A549 (cell line): ENCODE measurements at regions of chr20 and their contacts with region 1.

Region 1: GRCh38 chr20:50165684-50166554 is 12.4 kb upstream of the PEDS1 start:
- DNase-seq: peak; percentile 99 to 100
- ATAC-seq: peak; percentile 94 to 98
- H3K4me3 ChIP-seq: peak overlapping the region; percentile 30
- H3K27ac ChIP-seq: peak overlapping the region; percentile 81 to 92
- H3K4me1 ChIP-seq: peaks cover 40% of the 10 kb centered on the region
- CTCF ChIP-seq: no peak
- EP300 ChIP-seq: peak; percentile 68 to 90; a peak in 3 of 5 replicates
- POLR2A ChIP-seq: no peak
- RAD21 ChIP-seq: peak in 1 of 2 experiments; percentile 45; a peak in 2 of 5 replicates

Region 2: GRCh38 chr20:50085452-50086365 is 80.2 kb before region 1 on chr20:
- CTCF ChIA-PET with region 1: interaction called, 26 read pairs
- POLR2A ChIA-PET with region 1: no interaction called
- DNase-seq: peak; percentile 70 to 81
- ATAC-seq: peak; percentile 87 to 91
- H3K4me3 ChIP-seq: no peak overlapping the region
- H3K27ac ChIP-seq: peak overlapping the region; percentile 19 to 69; a peak in 4 of 6 replicates
- H3K4me1 ChIP-seq: peaks cover 29% of the 10 kb centered on the region
- CTCF ChIP-seq: peak; percentile 92
- EP300 ChIP-seq: no peak
- POLR2A ChIP-seq: no peak
- RAD21 ChIP-seq: peak; percentile 72 to 81

Region 3: GRCh38 chr20:50115591-50116372 is 50.1 kb before region 1 on chr20:
- CTCF ChIA-PET with region 1: interaction called, 1,085 read pairs
- POLR2A ChIA-PET with region 1: interaction called, 9 read pairs
- DNase-seq: peak; percentile 92 to 96
- ATAC-seq: peak; percentile 82 to 87
- H3K4me3 ChIP-seq: peak overlapping the region; percentile 54
- H3K27ac ChIP-seq: peak overlapping the region; percentile 69 to 84
- H3K4me1 ChIP-seq: peaks cover 31% of the 10 kb centered on the region
- CTCF ChIP-seq: no peak
- EP300 ChIP-seq: no peak
- POLR2A ChIP-seq: peak; percentile 61
- RAD21 ChIP-seq: no peak

Region 4: GRCh38 chr20:50146732-50147662 is 18.9 kb before region 1 on chr20:
- CTCF ChIA-PET with region 1: interaction called, 97 read pairs
- POLR2A ChIA-PET with region 1: interaction called, 19 read pairs
- DNase-seq: no peak
- ATAC-seq: no peak
- H3K4me3 ChIP-seq: no peak overlapping the region
- H3K27ac ChIP-seq: peak overlapping the region in 1 of 2 experiments; percentile 95; a peak in 4 of 6 replicates
- H3K4me1 ChIP-seq: peaks cover 79% of the 10 kb centered on the region
- CTCF ChIP-seq: no peak
- EP300 ChIP-seq: no peak
- POLR2A ChIP-seq: no peak
- RAD21 ChIP-seq: no peak

Region 5: GRCh38 chr20:50179507-50180016 is 13.6 kb after region 1 on chr20:
- CTCF ChIA-PET with region 1: interaction called, 21 read pairs
- POLR2A ChIA-PET with region 1: no interaction called
- DNase-seq: no peak
- ATAC-seq: peak; percentile 73 to 76
- H3K4me3 ChIP-seq: no peak overlapping the region
- H3K27ac ChIP-seq: peak overlapping the region; percentile 43 to 73; a peak in 5 of 6 replicates
- H3K4me1 ChIP-seq: peaks cover 4% of the 10 kb centered on the region; the same call in 1 of the 3 replicates
- CTCF ChIP-seq: no peak; the same call in 1 of the 3 replicates
- EP300 ChIP-seq: no peak
- POLR2A ChIP-seq: no peak
- RAD21 ChIP-seq: no peak